PC-9 (cell line): ENCODE measurements at regions of chr6 and their contacts with region 1.

Region 1: DNA sequence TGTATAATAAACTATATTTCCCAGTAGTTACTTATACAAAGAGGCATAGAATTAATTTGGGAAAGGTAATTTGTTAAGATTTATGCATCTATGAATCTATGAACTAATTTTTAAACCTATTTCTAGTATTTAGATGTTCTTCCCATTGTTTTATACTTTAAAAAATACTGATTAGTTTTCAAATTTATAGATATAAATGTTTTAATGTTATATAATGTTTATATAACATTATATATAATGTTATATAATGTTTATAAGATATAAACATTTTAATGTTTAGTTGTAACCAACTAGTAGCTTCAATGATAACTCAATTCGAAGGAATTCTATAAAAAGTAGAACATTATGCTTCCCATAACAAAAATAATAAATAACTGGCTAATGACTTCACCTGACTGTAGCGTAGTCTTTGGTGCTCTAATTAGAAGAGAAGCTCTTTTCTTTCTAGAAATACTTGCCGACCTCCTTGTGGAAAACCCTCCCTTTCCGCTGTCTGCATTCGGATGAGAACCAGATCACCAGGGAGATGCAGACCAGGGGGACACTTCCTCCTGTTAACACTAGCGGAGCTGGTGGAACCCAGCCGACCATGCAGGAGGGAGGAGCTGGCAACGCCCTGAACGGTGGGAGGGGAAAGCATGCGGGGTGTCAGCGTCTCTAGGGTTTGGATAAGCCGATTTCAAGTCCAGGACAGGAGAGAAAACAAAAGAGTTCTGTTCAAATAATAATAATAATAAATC is 158.4 kb downstream of the OR2B2 start:
- DNase-seq: peak; percentile 66 to 81
- H3K4me3 ChIP-seq: peak overlapping the region; percentile 73
- H3K27ac ChIP-seq: no peak overlapping the region
- H3K4me1 ChIP-seq: peaks cover 8% of the 10 kb centered on the region; the same call in 1 of the 2 replicates
- H3K27me3 ChIP-seq: no peaks in the 10 kb centered on the region
- CTCF ChIP-seq: no peak

Region 2: DNA sequence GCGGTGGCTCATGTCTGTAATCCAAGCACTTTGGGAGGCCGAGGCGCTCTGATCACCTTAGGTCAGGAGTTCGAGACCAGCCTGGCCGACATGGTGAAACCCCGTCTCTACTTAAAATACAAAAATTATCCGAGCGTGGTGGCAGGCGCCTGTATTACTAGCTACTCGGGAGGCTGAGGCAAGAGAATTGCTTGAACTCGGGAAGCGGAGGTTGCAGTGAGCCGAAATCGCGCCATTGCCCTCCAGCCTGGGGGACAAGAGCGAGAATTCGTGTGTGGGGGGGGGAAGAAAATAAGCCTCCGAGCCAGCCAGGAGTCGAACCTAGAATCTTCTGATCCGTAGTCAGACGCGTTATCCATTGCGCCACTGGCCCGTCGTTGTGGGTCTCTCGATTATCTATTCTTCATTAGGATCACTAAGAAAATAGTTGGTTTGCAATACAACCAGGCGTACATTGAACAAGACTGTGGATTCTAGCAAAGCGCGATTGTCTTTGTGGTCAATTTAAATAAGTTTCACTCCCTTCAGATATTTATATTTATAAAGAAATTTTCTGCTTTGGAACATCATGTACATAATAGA is 540.2 kb before region 1 on chr6:
- CTCF ChIA-PET with region 1: no interaction called
- POLR2A ChIA-PET with region 1: no interaction called
- intact Hi-C with region 1: loop called (anchors 1 kb)
- DNase-seq: peak; percentile 61
- H3K4me3 ChIP-seq: peak overlapping the region; percentile 73
- H3K27ac ChIP-seq: no peak overlapping the region
- H3K4me1 ChIP-seq: 0 out of 2 replicates have a peak, but pooled peaks cover 4% of the 10 kb centered on the region
- H3K27me3 ChIP-seq: no peaks in the 10 kb centered on the region
- CTCF ChIP-seq: no peak

Region 3: DNA sequence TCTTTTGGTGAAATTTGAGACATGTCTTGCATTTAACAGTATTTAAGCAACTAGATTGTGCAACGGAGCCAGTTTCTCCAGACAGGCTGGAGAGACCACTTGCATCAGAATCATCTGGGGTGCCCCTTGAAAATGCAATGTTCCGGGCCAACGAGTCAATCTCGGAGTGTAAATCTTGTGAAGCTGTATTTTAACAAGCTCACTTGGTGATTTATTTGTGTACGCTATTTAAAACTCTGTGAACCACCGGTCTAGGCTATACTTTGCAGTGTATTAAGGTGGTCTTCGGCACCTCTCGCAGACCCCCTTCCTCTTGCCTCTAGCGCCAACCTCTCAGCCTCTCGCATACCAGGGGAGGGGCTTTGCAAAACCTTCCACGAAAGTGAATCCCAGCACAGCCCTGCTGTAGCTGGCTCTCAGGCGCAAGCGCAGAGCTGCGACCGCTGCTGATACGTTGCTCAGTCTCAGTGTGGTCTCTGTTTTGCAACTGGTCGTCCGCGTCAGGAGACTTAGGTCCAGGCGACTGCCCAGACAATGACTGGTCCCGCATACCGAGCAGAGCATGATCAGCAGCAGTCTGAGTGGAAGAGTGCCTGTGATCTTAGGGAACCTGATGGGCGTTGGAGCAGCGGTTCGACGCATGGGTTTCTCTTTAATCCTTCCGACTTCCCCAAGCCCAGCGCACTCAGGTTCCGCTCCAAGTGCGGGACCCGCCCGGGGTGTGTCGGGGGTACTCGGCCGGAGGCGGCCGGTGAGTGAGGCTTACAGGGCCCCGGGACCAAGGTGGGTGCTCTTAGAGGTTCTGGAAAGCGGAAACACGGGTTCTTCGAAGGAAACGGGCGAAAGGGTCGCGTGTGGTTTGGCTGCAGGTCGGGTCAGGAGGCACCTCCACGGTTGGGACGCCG is 365.3 kb before region 1 on chr6 and contains the start of gene ZNF391:
- CTCF ChIA-PET with region 1: interaction called, 3 read pairs
- POLR2A ChIA-PET with region 1: interaction called, 10 read pairs
- intact Hi-C with region 1: no loop called
- DNase-seq: peak; percentile 66 to 76
- H3K4me3 ChIP-seq: peak within 1 kb of the TSS; percentile 65
- H3K27ac ChIP-seq: peak within 1 kb of the TSS; percentile 37
- H3K4me1 ChIP-seq: peaks cover 8% of the 10 kb centered on the region; the same call in 1 of the 2 replicates
- H3K27me3 ChIP-seq: no peaks in the 10 kb centered on the region
- CTCF ChIP-seq: no peak
- total RNA-seq, gene ZNF391: 4.6 and 4.7 TPM in 2 replicates

Region 4: DNA sequence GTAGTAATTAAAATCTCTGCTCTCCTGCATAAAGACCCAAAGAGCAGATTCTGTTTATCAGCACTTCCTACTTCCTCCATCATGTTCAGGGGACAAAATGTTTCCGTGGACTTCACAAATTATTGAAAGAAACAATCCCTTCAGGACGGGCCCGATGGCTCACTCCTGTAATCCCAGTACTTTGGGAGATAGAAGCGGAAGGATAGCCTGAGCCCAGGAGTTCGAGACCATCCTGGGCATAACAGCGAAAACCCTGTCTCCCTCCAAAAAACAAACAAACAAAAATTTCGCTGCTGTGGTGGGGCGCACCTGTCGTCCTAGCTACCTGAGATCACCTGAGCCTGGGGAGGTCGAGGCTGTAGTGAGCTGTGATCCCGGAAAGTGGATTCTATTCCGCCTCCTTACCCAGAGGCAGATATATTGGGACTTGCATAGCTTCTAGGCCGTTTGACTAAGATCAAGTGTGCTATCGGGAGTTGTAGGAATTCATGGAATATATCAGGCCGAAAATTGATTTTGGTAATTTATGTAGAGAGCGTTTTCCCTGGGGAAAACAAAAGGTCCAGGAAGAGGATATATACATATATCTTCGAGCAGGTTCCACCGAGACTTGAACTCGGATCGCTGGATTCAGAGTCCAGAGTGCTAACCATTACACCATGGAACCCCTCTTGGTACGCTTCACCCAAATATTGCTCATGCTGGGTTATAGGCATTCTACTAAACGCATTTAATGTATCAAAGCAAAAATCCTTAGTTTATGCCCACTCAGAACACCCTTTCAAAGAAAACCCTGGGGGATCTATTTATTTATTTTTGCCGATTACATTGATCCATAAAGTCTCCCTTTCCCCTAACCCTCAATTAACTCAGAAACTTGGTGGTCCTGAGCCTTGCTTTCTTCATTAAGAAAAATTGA is 206.4 kb before region 1 on chr6:
- CTCF ChIA-PET with region 1: interaction called, 4 read pairs
- POLR2A ChIA-PET with region 1: no interaction called
- intact Hi-C with region 1: loop called (anchors 5 kb)
- DNase-seq: peak; percentile 46 to 66
- H3K4me3 ChIP-seq: peak overlapping the region; percentile 64
- H3K27ac ChIP-seq: peak overlapping the region; percentile 37
- H3K4me1 ChIP-seq: no peaks in the 10 kb centered on the region; the same call in none of the 2 replicates
- H3K27me3 ChIP-seq: no peaks in the 10 kb centered on the region
- CTCF ChIP-seq: no peak

Region 5: GRCh38 chr6:27694545-27694870 is 59.3 kb before region 1 on chr6:
- CTCF ChIA-PET with region 1: no interaction called
- POLR2A ChIA-PET with region 1: interaction called, 10 read pairs
- intact Hi-C with region 1: no loop called
- DNase-seq: no peak
- H3K4me3 ChIP-seq: peak overlapping the region; percentile 65
- H3K27ac ChIP-seq: peak overlapping the region; percentile 79
- H3K4me1 ChIP-seq: peaks cover 8% of the 10 kb centered on the region; the same call in 1 of the 2 replicates
- H3K27me3 ChIP-seq: no peaks in the 10 kb centered on the region
- CTCF ChIP-seq: no peak